ENCODE measurements at regions of chr10 and their contacts with region 1.

Region 1: DNA sequence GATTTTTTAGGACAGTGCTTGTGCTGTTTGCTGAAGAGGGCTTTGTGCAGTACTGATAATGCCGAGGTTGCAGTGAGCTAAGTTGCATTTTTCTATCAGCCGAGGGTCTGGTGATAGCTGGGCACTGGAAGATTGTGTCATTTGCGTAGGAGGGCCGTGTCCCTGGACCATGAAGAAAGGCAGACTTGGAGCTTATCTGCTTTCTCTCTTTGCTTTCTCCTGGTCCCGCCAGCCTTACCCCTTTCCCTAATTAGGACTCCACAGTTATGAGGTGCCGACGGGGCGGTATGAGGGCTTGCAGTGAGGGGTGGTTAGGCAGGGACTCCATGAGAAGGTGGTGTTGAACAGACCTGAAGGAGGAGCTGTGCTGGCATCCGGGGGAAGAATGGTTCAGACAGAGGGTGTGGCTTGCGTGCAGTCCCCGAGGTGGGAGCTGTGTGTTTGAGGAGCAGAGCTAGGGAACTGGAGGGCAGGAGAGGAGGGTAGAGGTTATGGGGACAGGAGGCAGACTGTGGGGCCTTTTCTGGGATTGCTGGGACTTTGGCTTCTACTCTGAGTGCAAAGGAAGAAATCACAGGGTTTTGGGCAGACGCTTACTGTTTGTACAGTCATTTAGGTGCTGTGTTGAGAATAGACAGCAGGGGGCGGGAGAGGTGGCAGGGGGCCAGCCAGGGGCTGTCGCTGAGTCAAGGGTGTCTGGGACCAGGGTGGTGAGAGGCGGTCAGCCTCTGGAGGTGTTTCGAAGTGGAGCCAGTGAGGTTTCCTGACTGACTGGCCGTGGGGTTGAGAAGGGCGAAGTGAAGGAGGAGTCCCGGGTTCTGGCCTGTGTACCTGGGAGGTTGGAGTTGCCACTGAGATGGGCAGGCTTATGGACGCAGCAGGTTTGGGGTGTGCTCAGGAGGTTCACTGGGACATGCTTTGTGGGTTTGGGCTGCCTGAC is 43.4 kb downstream of the PRF1 start:
- DNase-seq: peak; percentile 90
- ATAC-seq: peak; percentile 96
- H3K4me3 Mint-ChIP-seq: peak overlapping the region; percentile 74
- H3K27ac Mint-ChIP-seq: peak overlapping the region; percentile 95
- H3K4me1 Mint-ChIP-seq: peaks cover 35% of the 10 kb centered on the region
- H3K27me3 Mint-ChIP-seq: no peaks in the 10 kb centered on the region

Region 2: GRCh38 chr10:70575874-70576802 is 17.0 kb after region 1 on chr10:
- CTCF ChIA-PET with region 1: interaction called, 40 read pairs
- DNase-seq: peak; percentile 86
- ATAC-seq: peak; percentile 31
- H3K4me3 Mint-ChIP-seq: peak overlapping the region; percentile 63
- H3K27ac Mint-ChIP-seq: peak overlapping the region; percentile 98
- H3K4me1 Mint-ChIP-seq: peaks cover 59% of the 10 kb centered on the region
- H3K27me3 Mint-ChIP-seq: no peaks in the 10 kb centered on the region

Region 3: GRCh38 chr10:70584909-70585544 is 25.9 kb after region 1 on chr10:
- CTCF ChIA-PET with region 1: interaction called, 23 read pairs
- DNase-seq: no peak
- ATAC-seq: no peak
- H3K4me3 Mint-ChIP-seq: no peak overlapping the region
- H3K27ac Mint-ChIP-seq: peak overlapping the region; percentile 7
- H3K4me1 Mint-ChIP-seq: peaks cover 21% of the 10 kb centered on the region
- H3K27me3 Mint-ChIP-seq: peaks cover 11% of the 10 kb centered on the region

Region 4: GRCh38 chr10:70592746-70593512 is 33.8 kb after region 1 on chr10:
- CTCF ChIA-PET with region 1: interaction called, 12 read pairs
- DNase-seq: no peak
- ATAC-seq: no peak
- H3K4me3 Mint-ChIP-seq: no peak overlapping the region
- H3K27ac Mint-ChIP-seq: no peak overlapping the region
- H3K4me1 Mint-ChIP-seq: peaks cover 60% of the 10 kb centered on the region
- H3K27me3 Mint-ChIP-seq: peaks cover 9% of the 10 kb centered on the region

Region 5: DNA sequence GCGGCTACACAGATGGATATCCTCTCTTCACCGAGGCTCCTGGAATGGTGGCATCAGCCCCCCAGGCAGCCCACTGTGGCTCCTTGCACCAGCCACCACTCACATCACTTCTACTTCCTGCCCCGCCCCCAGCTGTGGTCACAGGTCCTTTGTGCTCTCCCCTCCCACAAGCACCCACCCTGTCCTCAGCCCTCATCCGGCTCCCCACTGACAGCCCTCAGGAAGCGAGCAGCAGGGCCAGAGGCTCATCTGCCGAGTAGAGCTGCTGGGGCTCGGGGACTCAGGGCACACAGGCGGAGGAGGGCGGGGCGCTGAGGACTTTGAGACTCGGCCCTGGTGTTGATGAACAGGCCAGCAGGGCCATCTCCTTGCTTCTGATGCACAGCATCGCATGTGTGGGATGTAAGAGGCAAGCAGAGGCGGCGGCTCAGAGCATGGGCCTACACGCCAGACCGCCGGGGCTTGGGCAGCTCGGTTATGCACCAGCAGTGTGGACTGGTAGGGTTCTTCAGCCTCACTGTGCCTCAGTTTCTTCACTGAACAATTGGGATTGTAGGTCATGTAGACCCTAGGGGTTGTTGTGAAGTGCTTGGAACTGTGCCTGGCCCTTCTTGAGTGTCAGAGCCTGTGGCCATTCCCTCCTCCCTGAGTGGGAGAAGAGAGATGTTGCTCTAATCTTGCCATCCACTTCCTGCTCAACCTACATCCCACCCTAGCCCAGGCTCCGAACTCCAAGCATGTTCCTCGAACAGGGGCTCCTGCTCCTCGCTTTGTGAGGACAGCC is 43.7 kb after region 1 on chr10 and contains the start of gene PRF1:
- CTCF ChIA-PET with region 1: interaction called, 39 read pairs
- DNase-seq: peak; percentile 98
- ATAC-seq: peak; percentile 93
- H3K4me3 Mint-ChIP-seq: peak within 1 kb of the TSS; percentile 96
- H3K27ac Mint-ChIP-seq: peak within 1 kb of the TSS; percentile 95
- H3K4me1 Mint-ChIP-seq: peaks cover 60% of the 10 kb centered on the region
- H3K27me3 Mint-ChIP-seq: no peaks in the 10 kb centered on the region
- total RNA-seq, gene PRF1: 381 to 433 TPM

Region 6: DNA sequence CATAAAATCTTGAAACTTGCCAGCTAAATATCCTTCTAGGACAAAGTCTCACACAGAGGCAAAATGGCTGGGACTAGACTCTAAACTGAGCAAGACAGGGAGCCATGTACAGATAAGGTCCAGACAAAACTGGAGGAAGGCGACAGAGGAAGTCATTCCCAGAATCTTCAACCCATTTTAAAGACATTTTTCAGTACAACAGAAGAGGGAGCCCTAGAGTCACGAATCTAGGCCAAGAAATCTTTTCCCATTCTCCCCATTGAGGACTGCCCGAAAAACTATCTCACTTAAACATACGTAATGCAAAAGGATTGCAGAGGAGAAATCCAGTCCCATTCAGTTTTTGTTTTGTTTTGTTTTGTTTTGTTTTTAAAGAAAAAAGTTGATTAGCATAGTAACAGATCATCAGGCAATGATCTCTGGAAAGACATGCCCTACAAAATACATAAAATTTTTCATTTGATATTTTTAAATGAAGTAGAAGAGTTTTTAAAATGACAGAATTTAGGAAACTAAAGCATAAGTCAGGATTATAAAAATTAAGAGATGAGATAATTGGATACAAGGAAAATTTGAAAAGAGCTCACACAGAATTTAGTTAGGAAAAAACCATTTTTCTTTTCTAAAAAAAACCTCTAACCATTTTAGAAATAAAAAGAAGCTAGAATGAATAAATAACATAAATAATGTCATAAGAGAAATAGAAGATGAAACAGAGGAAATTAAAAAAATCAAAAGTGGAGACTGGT is 60.3 kb after region 1 on chr10:
- CTCF ChIA-PET with region 1: interaction called, 26 read pairs
- DNase-seq: no peak
- ATAC-seq: no peak
- H3K4me3 Mint-ChIP-seq: no peak overlapping the region
- H3K27ac Mint-ChIP-seq: peak overlapping the region; percentile 69
- H3K4me1 Mint-ChIP-seq: peaks cover 46% of the 10 kb centered on the region
- H3K27me3 Mint-ChIP-seq: no peaks in the 10 kb centered on the region

Region 7: DNA sequence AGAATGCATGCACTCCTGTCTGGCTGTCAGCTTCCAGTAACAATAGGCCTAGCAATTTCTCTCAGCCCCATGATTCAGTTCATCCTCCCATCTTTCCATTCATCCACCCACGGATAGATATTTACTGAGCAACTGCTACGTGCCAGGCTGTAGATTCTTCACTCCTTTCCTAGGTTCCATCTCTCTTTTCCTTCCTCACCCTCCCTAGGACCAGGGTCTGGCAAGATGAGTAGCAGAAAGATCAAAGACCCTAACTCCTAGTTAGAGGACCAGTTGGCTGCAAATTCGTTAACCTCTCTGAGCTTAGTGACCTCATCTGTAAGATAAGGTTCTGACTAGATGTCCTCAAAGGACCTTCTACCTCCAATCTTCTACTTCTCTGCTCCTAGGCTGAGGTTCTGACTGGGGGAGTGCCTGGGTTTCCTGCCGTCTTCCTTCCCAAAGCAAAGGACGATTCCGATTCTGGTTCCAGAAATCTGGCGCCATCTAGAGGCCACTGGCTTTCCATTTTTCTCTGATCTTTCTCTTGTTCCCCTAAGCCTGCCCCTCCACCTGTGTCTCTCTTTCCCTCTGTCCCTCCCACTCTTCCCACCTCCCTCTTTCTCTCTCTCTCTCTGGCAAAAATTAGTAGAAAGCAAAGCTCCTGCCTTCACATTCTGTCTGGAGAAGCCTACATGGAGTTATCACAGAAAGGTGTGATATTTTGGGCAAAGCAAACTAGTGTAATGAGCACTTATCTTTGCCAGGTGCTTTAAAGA is 199.8 kb after region 1 on chr10:
- CTCF ChIA-PET with region 1: interaction called, 86 read pairs
- DNase-seq: peak; percentile 78
- ATAC-seq: peak; percentile 77
- H3K4me3 Mint-ChIP-seq: no peak overlapping the region
- H3K27ac Mint-ChIP-seq: peak overlapping the region; percentile 41
- H3K4me1 Mint-ChIP-seq: peaks cover 13% of the 10 kb centered on the region
- H3K27me3 Mint-ChIP-seq: peaks cover 9% of the 10 kb centered on the region

Measured in activated CD8-positive, alpha-beta memory T cell treated with anti-CD3 and anti-CD28 coated beads, Interleukin-2, amount 10 ng/mL, durations not matched to agents 7 days and 5 days (primary cell).